Endothelial cell of umbilical vein (primary cell): ENCODE measurements at regions of chr7 and their contacts with region 1.

Region 1: DNA sequence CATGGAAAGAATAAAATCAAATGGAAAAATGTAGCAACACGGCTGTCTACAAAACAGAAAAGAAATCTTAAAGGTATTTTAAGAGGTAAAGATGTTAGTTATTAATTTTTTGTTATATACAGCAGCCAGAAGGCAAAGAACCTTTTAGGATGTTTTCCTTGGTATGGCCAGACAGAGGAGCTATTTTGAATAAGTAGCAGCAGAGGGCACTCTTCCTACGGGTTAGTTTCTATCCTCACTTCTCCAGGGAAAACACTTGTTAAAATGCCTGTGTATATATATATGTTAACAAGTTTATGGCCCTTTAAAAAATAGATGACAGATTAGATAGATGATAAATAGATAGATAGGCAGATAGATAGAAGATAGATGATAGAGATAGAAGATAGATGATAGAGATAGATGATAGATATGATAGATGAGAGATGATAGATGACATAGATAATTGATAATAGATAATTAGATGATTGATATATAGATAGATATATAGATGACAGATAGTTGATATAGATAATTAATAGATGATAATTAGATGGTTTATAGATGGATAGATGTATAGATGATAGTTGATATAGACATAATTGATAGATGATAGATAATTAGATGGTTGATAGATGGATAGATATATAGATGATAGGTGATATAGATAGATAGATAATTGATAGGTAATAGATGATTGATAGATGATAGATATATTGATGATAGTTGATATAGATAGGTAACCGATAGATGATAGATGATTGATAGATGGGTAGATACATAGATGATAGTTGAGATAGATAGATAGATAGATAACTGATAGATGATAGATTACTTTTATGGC is 57.8 kb upstream of the WIPF3 start:
- DNase-seq: peak; percentile 44
- H3K4me3 ChIP-seq: no peak overlapping the region
- H3K27ac ChIP-seq: no peak overlapping the region
- H3K4me1 ChIP-seq: peaks cover 5% of the 10 kb centered on the region
- H3K27me3 ChIP-seq: peaks cover 0 to 2% of the 10 kb centered on the region in 2 experiments
- CTCF ChIP-seq: peak; percentile 33 to 36
- POLR2A ChIP-seq: no peak

Region 2: DNA sequence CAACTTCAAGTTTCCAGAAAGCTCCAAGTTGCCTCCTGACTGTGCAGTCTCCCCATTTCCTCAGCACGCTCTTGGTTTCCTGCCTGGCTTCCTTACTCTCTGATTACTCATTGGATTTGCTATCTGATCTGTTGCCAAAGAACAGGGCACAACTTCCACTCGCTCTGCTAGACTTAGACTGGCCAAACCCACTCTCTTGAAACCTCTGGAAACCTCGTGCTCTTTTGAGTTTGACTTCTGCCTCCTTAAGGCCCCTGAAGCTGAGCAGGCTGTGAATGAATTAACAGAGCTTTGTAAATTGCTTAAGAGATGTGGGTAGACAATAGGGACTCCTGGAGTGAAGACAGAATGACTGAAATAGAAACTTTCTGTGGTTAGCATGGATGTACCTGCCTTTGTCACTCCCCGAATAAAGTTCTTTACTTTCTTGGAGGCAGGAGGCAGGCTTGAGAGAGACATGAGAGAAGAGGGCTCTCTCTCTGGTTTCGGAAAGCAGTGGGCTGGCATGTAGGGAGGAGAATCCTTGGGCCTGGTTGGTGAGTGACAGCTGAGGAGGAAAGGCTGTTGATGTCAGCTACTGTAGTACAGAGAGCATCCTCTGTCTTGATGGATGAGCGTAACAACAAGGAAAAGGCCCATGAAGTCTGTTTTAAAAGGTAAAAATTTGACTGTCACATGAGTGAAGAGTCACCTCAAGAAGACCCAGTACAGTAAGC is 483.1 kb before region 1 on chr7:
- CTCF ChIA-PET with region 1: no interaction called
- POLR2A ChIA-PET with region 1: no interaction called
- dilution Hi-C with region 1: no loop called
- intact Hi-C with region 1: no loop called
- DNase-seq: peak; percentile 94
- H3K4me3 ChIP-seq: no peak overlapping the region
- H3K27ac ChIP-seq: peak overlapping the region; percentile 89
- H3K4me1 ChIP-seq: peaks cover 16% of the 10 kb centered on the region
- H3K27me3 ChIP-seq: no peaks in the 10 kb centered on the region
- CTCF ChIP-seq: no peak
- POLR2A ChIP-seq: no peak

Region 3: DNA sequence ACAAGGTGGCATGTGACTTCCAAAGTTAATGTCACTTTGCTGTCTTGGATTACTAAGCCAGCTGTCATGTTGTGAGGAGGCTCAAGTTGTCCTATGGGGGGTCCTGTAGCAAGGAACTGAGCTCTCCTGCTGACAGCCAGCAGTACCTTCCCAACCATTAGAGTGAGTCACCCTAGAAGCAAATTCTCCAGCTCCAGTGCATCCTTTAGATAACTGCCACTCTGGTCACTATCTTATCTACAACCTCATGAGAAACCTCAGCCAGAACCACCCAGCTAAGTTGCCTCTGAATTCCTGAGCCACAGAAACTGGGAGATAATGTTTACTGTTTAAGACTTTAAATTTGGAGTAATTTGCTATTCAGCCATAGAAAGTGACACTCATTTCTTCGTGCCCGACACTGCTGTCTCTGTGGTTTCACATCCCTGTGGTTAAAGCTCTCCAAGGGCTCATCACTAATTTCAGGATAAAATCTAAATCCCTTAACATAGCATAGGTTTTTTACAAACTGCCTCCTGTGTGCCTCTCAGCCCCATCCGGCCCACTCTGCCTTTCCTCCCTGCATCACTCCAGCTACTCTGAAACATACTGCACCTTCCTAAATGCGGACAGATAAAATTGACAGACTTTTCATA is 101.4 kb before region 1 on chr7:
- CTCF ChIA-PET with region 1: no interaction called
- POLR2A ChIA-PET with region 1: no interaction called
- dilution Hi-C with region 1: no loop called
- intact Hi-C with region 1: loop called (anchors 1 kb)
- DNase-seq: no peak
- H3K4me3 ChIP-seq: no peak overlapping the region
- H3K27ac ChIP-seq: no peak overlapping the region
- H3K4me1 ChIP-seq: no peaks in the 10 kb centered on the region
- H3K27me3 ChIP-seq: no peaks in the 10 kb centered on the region
- CTCF ChIP-seq: no peak
- POLR2A ChIP-seq: no peak

Region 4: DNA sequence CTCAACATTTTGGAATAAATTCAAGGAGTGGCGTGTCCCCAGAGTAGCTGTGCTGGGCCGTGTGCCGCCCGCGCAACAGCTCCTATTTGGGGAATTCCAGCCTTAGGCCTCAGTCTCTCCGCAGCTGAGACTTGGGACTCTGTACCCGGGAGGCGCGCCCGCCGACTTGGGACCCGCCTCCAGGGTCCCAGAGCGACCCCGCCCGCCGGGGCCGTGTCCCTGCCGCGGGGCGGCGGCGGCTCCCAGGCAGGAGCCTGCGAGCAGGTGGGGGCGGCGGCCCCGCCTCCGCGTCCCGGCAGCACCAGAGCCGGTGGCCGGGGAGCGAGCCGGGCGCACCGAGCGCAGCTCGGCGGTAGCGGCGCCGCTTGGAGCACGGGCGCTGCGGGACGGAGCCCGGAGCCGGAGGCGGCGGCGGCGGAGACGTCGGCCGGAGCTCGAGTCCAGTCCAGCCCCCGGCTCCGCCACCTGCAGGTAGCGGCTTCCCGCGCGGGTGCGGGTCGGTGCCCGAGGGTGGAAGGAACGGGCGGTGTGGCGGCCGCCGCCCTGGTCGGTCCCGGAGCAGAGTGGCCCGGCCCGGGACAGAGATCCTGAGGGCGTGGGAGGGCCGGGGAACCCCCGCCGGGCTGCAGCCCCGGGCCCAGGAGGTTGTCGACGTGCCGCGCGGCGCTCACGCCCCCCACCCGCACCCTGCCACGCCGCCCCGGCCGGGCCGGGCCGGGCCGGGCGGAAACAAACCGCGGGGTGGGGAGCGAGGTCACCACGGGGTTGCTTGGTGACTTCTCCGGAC is 57.9 kb after region 1 on chr7 and contains the start of gene WIPF3:
- CTCF ChIA-PET with region 1: interaction called, 5 read pairs
- POLR2A ChIA-PET with region 1: no interaction called
- dilution Hi-C with region 1: no loop called
- intact Hi-C with region 1: loop called (anchors 5 kb)
- DNase-seq: peak; percentile 1
- H3K4me3 ChIP-seq: peak within 1 kb of the TSS in 1 of 3 experiments; percentile 30
- H3K27ac ChIP-seq: no peak within 1 kb of the TSS
- H3K4me1 ChIP-seq: peaks cover 3% of the 10 kb centered on the region
- H3K27me3 ChIP-seq: peaks cover 44 to 62% of the 10 kb centered on the region in 2 experiments
- CTCF ChIP-seq: no peak
- POLR2A ChIP-seq: no peak
- total RNA-seq, gene WIPF3: 0.35 TPM in 1 of 2 replicates, not detected in the other

Region 5: DNA sequence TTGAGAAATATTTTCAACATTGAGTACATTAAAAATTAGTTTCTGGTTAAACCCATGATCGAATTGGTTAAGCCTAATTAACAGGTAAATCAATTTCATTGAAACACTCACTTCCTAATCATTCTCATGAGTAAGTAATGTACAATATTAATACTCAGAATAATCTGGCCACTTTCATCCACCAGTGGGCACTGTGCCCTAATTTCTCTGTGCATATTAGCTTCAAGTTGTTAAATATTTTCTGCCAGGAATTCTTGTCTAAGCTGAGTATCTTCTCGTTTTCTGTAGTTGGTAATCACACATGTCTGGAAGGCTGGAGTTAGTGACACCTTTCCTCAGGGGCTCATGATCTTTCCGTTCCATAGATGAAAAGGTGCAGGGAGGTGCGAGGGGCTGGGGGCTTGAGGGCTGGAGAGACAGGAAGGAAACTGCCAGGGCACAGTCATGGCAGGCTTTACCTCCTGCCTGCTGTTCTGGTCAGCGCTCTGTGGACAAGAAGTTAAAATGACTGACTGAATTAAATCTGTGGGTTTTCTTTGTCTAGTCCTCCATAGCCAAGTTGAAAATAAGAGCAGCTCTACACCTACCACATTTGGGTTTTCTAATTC is 129.7 kb after region 1 on chr7:
- CTCF ChIA-PET with region 1: interaction called, 22 read pairs
- POLR2A ChIA-PET with region 1: no interaction called
- dilution Hi-C with region 1: no loop called
- intact Hi-C with region 1: loop called (anchors 2 kb)
- DNase-seq: peak; percentile 74
- H3K4me3 ChIP-seq: no peak overlapping the region
- H3K27ac ChIP-seq: no peak overlapping the region
- H3K4me1 ChIP-seq: peaks cover 2% of the 10 kb centered on the region
- H3K27me3 ChIP-seq: peaks cover 5% of the 10 kb centered on the region in 2 experiments
- CTCF ChIP-seq: peak; percentile 50 to 58
- POLR2A ChIP-seq: no peak

Region 6: DNA sequence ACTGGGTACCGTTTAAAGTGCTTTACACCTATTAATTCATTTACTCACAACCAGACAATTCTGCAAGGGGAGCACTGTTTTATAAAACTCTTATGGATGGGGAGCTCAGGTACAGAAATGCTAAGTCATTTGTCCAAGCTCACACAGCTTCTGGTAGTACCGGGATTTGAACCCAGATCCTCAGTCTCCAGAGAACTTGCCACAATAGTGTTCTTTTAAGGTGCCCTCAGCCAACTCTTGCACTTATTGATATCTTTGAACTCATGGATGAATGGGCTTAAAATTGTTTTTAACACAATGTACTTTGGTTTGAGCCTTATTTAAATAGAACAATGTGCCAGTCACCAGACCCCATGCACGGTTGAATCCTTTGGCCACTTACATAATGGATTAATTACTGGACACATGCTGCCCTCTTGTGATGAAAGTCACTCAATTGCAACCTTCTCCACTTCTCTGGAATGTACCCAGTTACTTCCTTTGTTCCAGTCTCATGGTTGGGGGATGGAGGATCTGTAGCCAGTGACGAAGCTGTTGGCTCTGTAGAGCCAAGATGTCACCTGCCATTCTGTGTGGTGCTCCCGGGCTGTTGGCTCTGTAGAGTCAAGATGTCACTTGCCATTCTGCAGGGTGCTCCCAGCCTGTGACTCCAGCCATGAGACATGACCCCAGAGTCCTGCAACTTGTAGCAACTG is 664.5 kb after region 1 on chr7:
- CTCF ChIA-PET with region 1: interaction called, 4 read pairs
- POLR2A ChIA-PET with region 1: no interaction called
- dilution Hi-C with region 1: no loop called
- intact Hi-C with region 1: loop called (anchors 2 kb)
- DNase-seq: peak; percentile 90
- H3K4me3 ChIP-seq: no peak overlapping the region
- H3K27ac ChIP-seq: no peak overlapping the region
- H3K4me1 ChIP-seq: no peaks in the 10 kb centered on the region
- H3K27me3 ChIP-seq: no peaks in the 10 kb centered on the region
- CTCF ChIP-seq: peak; percentile 57 to 62
- POLR2A ChIP-seq: no peak